K562 (cell line): ENCODE measurements at regions of chr4 and their contacts with region 1.

Region 1: DNA sequence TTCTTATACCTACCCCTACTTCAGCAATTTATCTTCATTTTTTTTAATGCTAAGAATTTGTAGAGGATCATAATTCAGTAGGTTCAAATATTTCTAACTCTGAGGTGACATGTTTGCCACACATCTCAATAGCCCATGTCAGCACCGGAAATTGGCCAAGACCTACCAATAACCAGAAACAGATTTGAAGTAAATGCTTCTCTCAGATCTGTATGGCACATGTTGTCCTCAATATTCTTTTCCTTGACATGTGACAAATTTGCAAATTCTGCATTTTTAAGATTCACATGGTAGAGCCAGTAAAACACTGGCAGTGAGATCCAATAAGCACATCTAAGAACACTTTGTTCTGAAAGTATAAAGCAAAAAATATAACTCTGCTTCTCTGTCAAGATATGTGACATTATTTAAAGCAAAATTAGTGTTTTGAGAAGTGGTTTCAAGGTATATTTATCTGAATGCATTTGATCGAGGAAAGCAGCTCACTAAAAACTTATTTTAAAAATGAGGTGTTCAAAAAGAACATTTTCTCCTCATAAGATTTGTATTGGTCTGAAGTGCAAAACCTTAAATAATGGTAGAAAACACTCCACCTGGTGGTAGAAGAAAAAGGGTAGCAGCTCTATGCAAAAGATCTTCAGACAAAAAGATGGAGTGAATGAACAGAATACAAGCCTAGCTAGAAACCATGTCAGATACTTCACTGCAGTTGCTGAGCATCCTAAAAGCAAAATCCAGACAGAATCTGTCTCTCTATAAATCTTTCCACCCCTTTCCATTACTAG is 513.8 kb upstream of the FAM241A start:
- DNase-seq: no peak
- ATAC-seq: no peak
- H3K4me3 ChIP-seq: no peak overlapping the region
- H3K27ac ChIP-seq: no peak overlapping the region
- H3K4me1 ChIP-seq: no peaks in the 10 kb centered on the region
- H3K27me3 ChIP-seq: no peaks in the 10 kb centered on the region
- CTCF ChIP-seq: no peak
- EP300 ChIP-seq: no peak
- POLR2A ChIP-seq: no peak
- RAD21 ChIP-seq: 0 out of 4 replicates have a peak, but pooled peaks of 1 of the 2 experiments have one; percentile 2

Region 2: DNA sequence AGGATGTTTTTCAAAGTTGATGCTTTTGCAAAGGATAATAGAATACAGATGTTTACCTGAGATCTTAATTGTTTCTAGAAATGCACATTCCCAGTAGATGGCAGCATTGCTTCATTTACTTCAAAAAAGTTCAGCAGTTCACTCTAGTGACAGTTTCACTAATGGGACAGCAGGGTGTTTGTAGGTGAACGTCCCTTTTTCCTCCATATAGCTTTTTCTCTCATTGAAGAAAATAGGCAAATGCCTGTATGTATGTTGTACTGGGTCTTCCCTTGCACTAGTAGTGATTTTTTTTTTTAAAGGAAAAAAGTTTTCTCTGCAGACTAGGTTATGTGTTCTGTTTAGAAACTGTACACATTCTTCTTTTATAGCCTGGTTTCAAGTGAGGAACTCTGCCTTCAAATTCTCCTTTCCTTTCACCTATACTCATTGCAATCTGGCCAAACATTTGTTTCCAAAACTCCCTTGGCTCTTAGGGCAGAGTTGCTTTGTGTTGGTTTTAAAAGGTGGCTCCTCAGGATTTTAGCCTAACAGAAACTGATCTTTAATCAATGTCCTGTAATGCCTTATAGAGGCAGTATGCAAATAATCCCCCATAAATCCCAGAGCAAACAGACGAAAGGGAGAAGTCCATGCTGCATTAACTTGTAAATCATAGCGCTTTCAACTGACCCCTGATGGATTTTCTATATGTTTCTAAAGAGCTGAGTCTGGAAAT is 1632.4 kb before region 1 on chr4:
- CTCF ChIA-PET with region 1: no interaction called
- POLR2A ChIA-PET with region 1: no interaction called
- in situ Hi-C with region 1: no loop called
- intact Hi-C with region 1: loop called (anchors 10 kb)
- DNase-seq: peak; percentile 42 to 76 (median 50)
- ATAC-seq: peak; percentile 91
- H3K4me3 ChIP-seq: no peak overlapping the region
- H3K27ac ChIP-seq: no peak overlapping the region
- H3K4me1 ChIP-seq: no peaks in the 10 kb centered on the region; a peak in 3 of 5 replicates
- H3K27me3 ChIP-seq: no peaks in the 10 kb centered on the region
- CTCF ChIP-seq: peak; percentile 62 to 93 (median 88); a peak in 5 of 6 replicates
- EP300 ChIP-seq: no peak
- POLR2A ChIP-seq: no peak
- RAD21 ChIP-seq: peak; percentile 83 to 85

Region 3: GRCh38 chr4:110631584-110632505 is 999.6 kb before region 1 on chr4:
- CTCF ChIA-PET with region 1: no interaction called
- POLR2A ChIA-PET with region 1: no interaction called
- in situ Hi-C with region 1: no loop called
- intact Hi-C with region 1: loop called (anchors 5 kb)
- DNase-seq: peak; percentile 65 to 72 (median 71)
- ATAC-seq: peak; percentile 99
- H3K4me3 ChIP-seq: no peak overlapping the region
- H3K27ac ChIP-seq: no peak overlapping the region
- H3K4me1 ChIP-seq: peaks cover 0 to 20% of the 10 kb centered on the region in 2 experiments; a peak in 2 of 5 replicates
- H3K27me3 ChIP-seq: peaks cover 39 to 53% of the 10 kb centered on the region in 2 experiments; a peak in 4 of 5 replicates
- CTCF ChIP-seq: peak; percentile 68 to 84 (median 75)
- EP300 ChIP-seq: no peak
- POLR2A ChIP-seq: no peak
- RAD21 ChIP-seq: peak; percentile 34 to 60; a peak in 3 of 4 replicates

Region 4: GRCh38 chr4:111410571-111410970 is 220.8 kb before region 1 on chr4:
- CTCF ChIA-PET with region 1: no interaction called
- POLR2A ChIA-PET with region 1: no interaction called
- in situ Hi-C with region 1: no loop called
- intact Hi-C with region 1: no loop called
- DNase-seq: no peak
- ATAC-seq: no peak
- H3K4me3 ChIP-seq: no peak overlapping the region
- H3K27ac ChIP-seq: no peak overlapping the region
- H3K4me1 ChIP-seq: no peaks in the 10 kb centered on the region
- H3K27me3 ChIP-seq: no peaks in the 10 kb centered on the region
- CTCF ChIP-seq: no peak
- EP300 ChIP-seq: no peak
- POLR2A ChIP-seq: no peak
- RAD21 ChIP-seq: no peak

Region 5: GRCh38 chr4:111494971-111495370 is 136.4 kb before region 1 on chr4:
- CTCF ChIA-PET with region 1: no interaction called
- POLR2A ChIA-PET with region 1: no interaction called
- in situ Hi-C with region 1: no loop called
- intact Hi-C with region 1: no loop called
- DNase-seq: no peak
- ATAC-seq: no peak
- H3K4me3 ChIP-seq: no peak overlapping the region
- H3K27ac ChIP-seq: no peak overlapping the region
- H3K4me1 ChIP-seq: no peaks in the 10 kb centered on the region
- H3K27me3 ChIP-seq: no peaks in the 10 kb centered on the region
- CTCF ChIP-seq: no peak
- EP300 ChIP-seq: no peak
- POLR2A ChIP-seq: no peak
- RAD21 ChIP-seq: no peak

Region 6: GRCh38 chr4:111689214-111689613 is 57.8 kb after region 1 on chr4:
- CTCF ChIA-PET with region 1: no interaction called
- POLR2A ChIA-PET with region 1: no interaction called
- in situ Hi-C with region 1: no loop called
- intact Hi-C with region 1: no loop called
- DNase-seq: no peak
- ATAC-seq: no peak
- H3K4me3 ChIP-seq: no peak overlapping the region
- H3K27ac ChIP-seq: no peak overlapping the region
- H3K4me1 ChIP-seq: no peaks in the 10 kb centered on the region
- H3K27me3 ChIP-seq: no peaks in the 10 kb centered on the region
- CTCF ChIP-seq: no peak
- EP300 ChIP-seq: no peak
- POLR2A ChIP-seq: no peak
- RAD21 ChIP-seq: no peak